ENCODE measurements at regions of chr5 and their contacts with region 1.

Region 1: GRCh38 chr5:174793684-174794328 is 69.4 kb downstream of the MSX2 start:
- DNase-seq: peak; percentile 69
- CTCF ChIP-seq: peak; percentile 84

Region 2: GRCh38 chr5:174409070-174409469 is 384.7 kb before region 1 on chr5:
- CTCF ChIA-PET with region 1: interaction called, 12 read pairs
- POLR2A ChIA-PET with region 1: no interaction called
- DNase-seq: no peak
- CTCF ChIP-seq: no peak

Region 3: DNA sequence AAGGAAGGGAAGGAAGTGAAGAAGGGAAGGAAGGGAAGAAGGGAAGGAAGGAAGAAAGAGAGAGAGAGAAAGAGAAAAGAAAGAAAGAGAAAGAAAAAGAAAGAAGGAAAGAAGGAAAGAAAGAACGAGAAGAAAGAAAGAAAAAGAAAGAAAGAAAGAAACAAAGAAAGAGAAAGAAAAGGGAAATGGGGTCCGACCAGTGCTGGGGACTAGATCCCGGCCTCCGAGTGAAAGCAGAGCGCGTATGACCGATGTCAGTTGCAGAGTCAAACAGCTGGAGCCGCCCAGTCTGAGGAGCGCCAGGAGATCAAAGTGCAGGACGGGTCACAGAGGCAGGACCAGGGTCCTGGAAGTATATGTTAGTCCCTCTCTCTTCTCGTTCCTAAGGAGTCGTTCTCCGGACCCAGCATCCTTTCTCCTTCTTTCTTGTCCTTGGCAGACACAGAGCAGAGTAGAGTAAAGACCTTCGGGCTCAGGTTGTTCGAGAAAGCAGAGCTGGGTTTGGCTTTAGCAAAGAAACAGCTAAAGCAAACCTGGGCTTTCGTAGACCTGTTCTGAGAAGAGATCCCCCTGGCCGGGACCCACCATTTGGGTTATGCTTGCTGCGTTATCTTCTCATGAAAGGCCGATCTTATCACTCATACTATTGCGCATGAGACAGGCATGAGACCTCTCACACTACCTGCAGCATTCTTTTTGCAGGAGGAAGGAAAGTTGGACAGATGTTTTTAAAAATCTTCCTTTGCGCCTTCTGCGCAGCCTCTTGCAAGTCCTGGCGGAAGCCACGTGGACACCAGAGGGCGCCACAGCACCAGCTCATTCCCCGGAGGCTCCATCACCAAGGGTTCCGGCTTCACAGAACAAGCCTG is 374.6 kb before region 1 on chr5:
- CTCF ChIA-PET with region 1: interaction called, 61 read pairs
- POLR2A ChIA-PET with region 1: no interaction called
- DNase-seq: peak; percentile 73
- CTCF ChIP-seq: peak; percentile 94

Region 4: DNA sequence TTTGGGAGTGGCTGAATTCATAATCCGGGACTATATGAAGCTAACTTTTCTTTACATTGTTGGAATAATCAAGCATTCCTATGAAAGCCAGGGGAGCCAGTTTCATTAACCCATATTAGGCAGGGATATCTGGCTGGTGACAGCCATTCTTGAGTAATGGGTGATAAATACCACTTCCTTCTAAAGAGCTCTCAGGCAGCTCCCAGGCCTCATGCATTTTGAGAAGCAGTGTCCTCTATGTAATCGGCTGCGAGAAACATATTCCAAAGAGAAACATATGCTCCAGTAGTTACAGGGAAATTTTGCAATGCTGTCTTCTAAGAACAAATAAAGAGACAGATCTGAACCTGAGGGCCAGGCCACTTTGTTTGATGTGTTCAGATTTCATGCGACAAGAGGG is 13.7 kb after region 1 on chr5:
- CTCF ChIA-PET with region 1: interaction called, 17 read pairs
- POLR2A ChIA-PET with region 1: no interaction called
- DNase-seq: no peak
- CTCF ChIP-seq: no peak